Left cardiac atrium (tissue), 4 donors: ENCODE measurements at regions of chr12 and their contacts with region 1.

Region 1: GRCh38 chr12:116599285-116600136 is 40.3 kb downstream of the MAP1LC3B2 start:
- DNase-seq: peak; percentile 88
- ATAC-seq: peak; percentile 87 to 88

Region 2: GRCh38 chr12:115879354-115879753 is 720.2 kb before region 1 on chr12:
- intact Hi-C with region 1: no loop called
- DNase-seq: no peak
- ATAC-seq: no peak

Region 3: DNA sequence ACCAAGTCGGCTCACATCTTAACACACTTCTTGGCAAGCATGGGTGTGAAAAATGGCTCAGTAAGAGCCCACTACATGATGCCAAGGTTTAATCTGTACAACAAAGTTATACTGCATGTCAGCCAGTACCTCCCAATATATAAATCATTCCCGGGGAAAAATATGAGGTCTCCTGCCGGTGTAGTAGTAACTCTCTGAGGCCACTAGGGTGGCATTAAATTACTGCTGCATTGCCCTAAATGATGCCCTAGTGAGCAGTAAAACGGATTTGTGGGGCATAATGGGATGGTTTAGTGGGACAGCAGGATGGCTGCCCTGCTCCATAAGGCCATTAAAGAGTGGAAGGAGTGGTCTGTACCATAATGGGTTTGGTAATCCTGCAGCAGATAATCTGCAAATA is 589.7 kb before region 1 on chr12:
- intact Hi-C with region 1: loop called (anchors 5 to 10 kb)
- DNase-seq: no peak
- ATAC-seq: no peak

Region 4: GRCh38 chr12:116015525-116015924 is 584.0 kb before region 1 on chr12:
- intact Hi-C with region 1: loop called (anchors 5 to 10 kb)
- DNase-seq: no peak
- ATAC-seq: peak; percentile 63 to 80

Region 5: GRCh38 chr12:116277393-116278278 is 321.9 kb before region 1 on chr12 and contains the start of gene MED13L:
- intact Hi-C with region 1: loop called (anchors 5 to 10 kb)
- DNase-seq: peak; percentile 90
- ATAC-seq: peak; percentile 95
- total RNA-seq, gene MED13L: 66.0 to 68.3 TPM